H1 (cell line): ENCODE measurements at regions of chr3 and their contacts with region 1.

Region 1: GRCh38 chr3:109224333-109224732 is 87.8 kb downstream of the C3orf85 start:
- DNase-seq: peak; percentile 36 to 77
- H3K4me3 ChIP-seq: no peak overlapping the region
- H3K27ac ChIP-seq: no peak overlapping the region
- H3K4me1 ChIP-seq: no peaks in the 10 kb centered on the region
- H3K27me3 ChIP-seq: no peaks in the 10 kb centered on the region
- CTCF ChIP-seq: peak; percentile 77 to 92 (median 89)
- EP300 ChIP-seq: no peak
- POLR2A ChIP-seq: no peak
- RAD21 ChIP-seq: peak; percentile 83 to 87

Region 2: GRCh38 chr3:109213321-109213720 is 11.0 kb before region 1 on chr3:
- CTCF ChIA-PET with region 1: interaction called, 11 read pairs
- POLR2A ChIA-PET with region 1: no interaction called
- DNase-seq: no peak
- H3K4me3 ChIP-seq: no peak overlapping the region
- H3K27ac ChIP-seq: no peak overlapping the region
- H3K4me1 ChIP-seq: no peaks in the 10 kb centered on the region
- H3K27me3 ChIP-seq: no peaks in the 10 kb centered on the region
- CTCF ChIP-seq: no peak
- EP300 ChIP-seq: no peak
- POLR2A ChIP-seq: no peak
- RAD21 ChIP-seq: no peak